Prostate gland (tissue), 2 donors: ENCODE measurements at regions of chr20 and their contacts with region 1.

Region 1: GRCh38 chr20:50460460-50461267 is 49.5 kb upstream of the PTPN1 start:
- DNase-seq: peak; percentile 84
- H3K4me3 ChIP-seq: no peak overlapping the region
- H3K27ac ChIP-seq: peak overlapping the region; percentile 13 to 51
- H3K4me1 ChIP-seq: no peaks in the 10 kb centered on the region
- H3K27me3 ChIP-seq: no peaks in the 10 kb centered on the region
- CTCF ChIP-seq: peak; percentile 91 to 98 (median 96)
- POLR2A ChIP-seq: no peak

Region 2: GRCh38 chr20:50115591-50116372 is 344.9 kb before region 1 on chr20:
- intact Hi-C with region 1: loop called (anchors 10 kb)
- DNase-seq: peak; percentile 98
- H3K4me3 ChIP-seq: peak overlapping the region; percentile 25 to 34
- H3K27ac ChIP-seq: peak overlapping the region; percentile 63 to 70
- H3K4me1 ChIP-seq: peaks cover 12% of the 10 kb centered on the region
- H3K27me3 ChIP-seq: no peaks in the 10 kb centered on the region
- CTCF ChIP-seq: no peak
- POLR2A ChIP-seq: peak; percentile 25

Region 3: GRCh38 chr20:50274570-50275430 is 185.9 kb before region 1 on chr20:
- intact Hi-C with region 1: loop called (anchors 5 kb)
- DNase-seq: no peak
- H3K4me3 ChIP-seq: no peak overlapping the region
- H3K27ac ChIP-seq: no peak overlapping the region
- H3K4me1 ChIP-seq: no peaks in the 10 kb centered on the region
- H3K27me3 ChIP-seq: no peaks in the 10 kb centered on the region
- CTCF ChIP-seq: no peak
- POLR2A ChIP-seq: no peak

Region 4: GRCh38 chr20:50379049-50379990 is 81.3 kb before region 1 on chr20:
- intact Hi-C with region 1: loop called (anchors 5 kb)
- DNase-seq: peak; percentile 76
- H3K4me3 ChIP-seq: no peak overlapping the region
- H3K27ac ChIP-seq: peak overlapping the region; percentile 73 to 80
- H3K4me1 ChIP-seq: peaks cover 8% of the 10 kb centered on the region
- H3K27me3 ChIP-seq: no peaks in the 10 kb centered on the region
- CTCF ChIP-seq: no peak
- POLR2A ChIP-seq: no peak

Region 5: DNA sequence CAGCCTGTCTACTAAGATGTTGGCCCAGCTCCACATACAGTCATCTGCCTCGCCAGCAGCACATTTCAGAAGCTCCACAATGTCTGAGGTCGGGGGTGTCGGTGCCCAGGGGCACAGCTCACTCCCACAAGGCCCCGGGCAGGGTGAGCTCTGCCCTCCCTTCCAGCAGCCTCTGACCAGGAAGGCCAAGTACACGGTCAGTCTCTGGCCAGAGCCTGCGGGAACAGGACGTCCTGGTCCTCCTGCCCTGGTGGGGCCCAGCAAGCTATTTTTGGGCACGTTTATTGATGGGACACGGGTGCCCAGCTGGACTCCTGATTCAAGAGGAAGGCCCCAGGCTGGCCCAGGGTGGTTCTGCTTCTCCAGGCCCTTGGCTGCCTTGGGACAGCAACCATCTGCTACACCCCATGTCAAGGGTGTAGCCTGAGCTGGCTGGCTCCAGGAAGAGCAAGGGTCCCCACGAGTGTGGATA is 65.4 kb before region 1 on chr20:
- intact Hi-C with region 1: loop called (anchors 5 kb)
- DNase-seq: peak; percentile 55
- H3K4me3 ChIP-seq: no peak overlapping the region
- H3K27ac ChIP-seq: peak overlapping the region; percentile 69 to 76
- H3K4me1 ChIP-seq: peaks cover 8% of the 10 kb centered on the region
- H3K27me3 ChIP-seq: no peaks in the 10 kb centered on the region
- CTCF ChIP-seq: no peak
- POLR2A ChIP-seq: no peak

Region 6: GRCh38 chr20:50575847-50576720 is 115.4 kb after region 1 on chr20:
- intact Hi-C with region 1: loop called (anchors 5 kb)
- DNase-seq: peak; percentile 71
- H3K4me3 ChIP-seq: no peak overlapping the region
- H3K27ac ChIP-seq: peak overlapping the region in 1 of 2 donors; percentile 21
- H3K4me1 ChIP-seq: peaks cover 8% of the 10 kb centered on the region
- H3K27me3 ChIP-seq: no peaks in the 10 kb centered on the region
- CTCF ChIP-seq: peak; percentile 33 to 82 (median 79)
- POLR2A ChIP-seq: no peak